ENCODE measurements at regions of chr2 and their contacts with region 1.

Region 1: DNA sequence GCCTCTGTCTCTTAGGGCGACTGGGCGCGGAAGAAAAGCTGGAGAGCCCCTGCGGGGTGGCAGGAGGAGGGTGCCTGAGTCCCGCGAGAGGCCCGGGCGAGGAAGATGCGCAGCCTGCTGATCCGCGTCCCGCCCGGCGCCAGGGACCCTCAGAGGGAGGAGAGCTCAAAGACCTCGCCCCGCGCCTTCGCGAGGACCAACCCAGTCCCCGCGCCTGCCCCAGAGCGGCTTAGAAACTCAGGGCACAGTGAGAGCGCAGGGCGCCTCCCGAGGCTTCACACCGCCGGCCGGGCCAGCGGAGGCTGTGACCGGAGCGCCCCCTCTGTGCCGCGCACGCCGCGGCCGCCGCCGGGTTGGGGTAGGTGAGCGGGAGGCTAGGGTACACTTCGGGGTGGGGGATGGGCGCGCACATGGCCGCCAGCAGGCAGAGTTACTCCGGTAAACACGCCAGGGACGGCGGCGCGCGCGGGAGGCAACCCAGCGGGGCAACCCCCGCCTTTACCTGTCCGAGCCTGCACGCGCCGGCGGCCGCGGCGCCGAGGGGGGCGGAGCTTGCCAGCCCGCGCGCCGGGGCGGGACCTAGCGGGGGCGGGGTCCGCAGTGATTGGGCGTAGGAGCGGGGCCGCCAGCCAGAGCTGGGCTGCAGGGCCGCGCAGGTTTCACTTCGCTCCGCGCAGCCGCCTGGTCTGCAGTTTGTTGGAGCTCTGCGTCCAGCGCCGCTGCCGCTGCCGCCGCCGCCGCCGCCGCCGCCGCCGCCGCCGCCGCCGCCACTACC is at the start of gene BCL2L11:
- DNase-seq: peak; percentile 77 to 98 (median 88)

Region 2: GRCh38 chr2:110812726-110813645 is 307.5 kb before region 1 on chr2:
- intact Hi-C with region 1: loop called (anchors 5 kb)
- DNase-seq: no peak

Region 3: GRCh38 chr2:111162718-111163331 is 42.4 kb after region 1 on chr2:
- intact Hi-C with region 1: loop called (anchors 5 kb)
- DNase-seq: no peak